Activated T-helper 2 cell treated with anti-CD3 and anti-CD28 coated beads, Interferon-gamma antibody, Interleukin-2, Interleukin-4, amounts not matched to agents 10 μg/mL and 5 μg/mL and 100 μg/mL, durations not matched to agents 14 hours and 24 hours and 36 hours (primary cell): ENCODE measurements at regions of chr3 and their contacts with region 1.

Region 1: GRCh38 chr3:149480325-149481017 is 6.0 kb downstream of the TM4SF4 start:
- DNase-seq: peak; percentile 17
- H3K4me3 Mint-ChIP-seq: no peak overlapping the region
- H3K27ac Mint-ChIP-seq: no peak overlapping the region
- H3K4me1 Mint-ChIP-seq: no peaks in the 10 kb centered on the region
- H3K27me3 Mint-ChIP-seq: peaks cover 2% of the 10 kb centered on the region

Region 2: GRCh38 chr3:149352556-149352955 is 127.9 kb before region 1 on chr3:
- intact Hi-C with region 1: loop called (anchors 5 kb)
- DNase-seq: peak; percentile 9
- H3K4me3 Mint-ChIP-seq: no peak overlapping the region
- H3K27ac Mint-ChIP-seq: no peak overlapping the region
- H3K4me1 Mint-ChIP-seq: no peaks in the 10 kb centered on the region
- H3K27me3 Mint-ChIP-seq: peaks cover 23% of the 10 kb centered on the region

Region 3: DNA sequence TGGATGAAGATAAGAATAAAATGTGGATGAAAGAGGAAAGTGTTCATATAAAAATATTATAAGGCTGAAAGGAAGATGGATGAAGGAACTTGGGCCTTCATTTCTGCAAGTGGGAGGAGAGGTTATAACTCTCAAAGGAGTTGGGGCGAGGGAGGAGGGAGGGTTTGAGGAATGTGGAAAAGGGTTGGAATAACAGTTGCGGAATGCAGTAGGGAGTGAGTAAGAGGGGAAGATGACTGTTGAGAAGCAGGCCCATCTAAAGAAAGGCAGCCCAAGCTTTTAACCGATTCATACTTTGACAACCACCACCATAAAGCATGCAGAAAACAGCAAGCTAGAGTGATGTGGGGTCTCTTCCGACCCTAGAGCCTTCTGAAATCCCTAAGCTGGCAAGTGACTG is 14.3 kb before region 1 on chr3:
- intact Hi-C with region 1: no loop called
- DNase-seq: no peak
- H3K4me3 Mint-ChIP-seq: no peak overlapping the region
- H3K27ac Mint-ChIP-seq: no peak overlapping the region
- H3K4me1 Mint-ChIP-seq: no peaks in the 10 kb centered on the region
- H3K27me3 Mint-ChIP-seq: peaks cover 6% of the 10 kb centered on the region